SK-N-SH (cell line): ENCODE measurements at regions of chr2 and their contacts with region 1.

Region 1: DNA sequence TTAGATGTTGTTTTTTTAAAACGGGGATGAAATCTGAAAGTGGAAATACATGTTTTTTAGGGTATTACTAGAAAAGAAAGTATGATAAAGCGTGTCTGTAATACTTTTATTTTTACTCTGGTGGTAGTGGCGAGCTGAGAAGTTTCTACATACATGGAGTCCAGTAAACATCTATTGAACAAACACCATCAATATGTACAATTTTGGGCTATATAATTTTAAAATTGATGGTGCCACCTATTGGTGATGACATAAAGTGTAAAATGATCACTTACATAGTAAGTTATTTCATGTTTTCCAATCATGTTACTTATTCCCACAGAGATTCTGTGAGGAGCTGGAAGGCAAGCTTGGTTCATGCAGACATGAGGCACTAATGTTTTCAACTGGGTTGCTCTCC is 31.5 kb upstream of the NFE2L2 start:
- DNase-seq: peak; percentile 14
- H3K4me3 ChIP-seq: no peak overlapping the region
- H3K27ac ChIP-seq: peak overlapping the region; percentile 21 to 81; a peak in 2 of 4 replicates
- H3K4me1 ChIP-seq: no peaks in the 10 kb centered on the region
- H3K27me3 ChIP-seq: no peaks in the 10 kb centered on the region
- CTCF ChIP-seq: peak; percentile 57
- EP300 ChIP-seq: no peak
- RAD21 ChIP-seq: peak; percentile 46

Region 2: GRCh38 chr2:177273408-177273807 is 22.6 kb before region 1 on chr2:
- CTCF ChIA-PET with region 1: interaction called, 13 read pairs
- POLR2A ChIA-PET with region 1: no interaction called
- DNase-seq: no peak
- H3K4me3 ChIP-seq: no peak overlapping the region
- H3K27ac ChIP-seq: no peak overlapping the region
- H3K4me1 ChIP-seq: no peaks in the 10 kb centered on the region; a peak in 1 of 4 replicates
- H3K27me3 ChIP-seq: no peaks in the 10 kb centered on the region
- CTCF ChIP-seq: no peak
- EP300 ChIP-seq: no peak
- RAD21 ChIP-seq: no peak

Region 3: DNA sequence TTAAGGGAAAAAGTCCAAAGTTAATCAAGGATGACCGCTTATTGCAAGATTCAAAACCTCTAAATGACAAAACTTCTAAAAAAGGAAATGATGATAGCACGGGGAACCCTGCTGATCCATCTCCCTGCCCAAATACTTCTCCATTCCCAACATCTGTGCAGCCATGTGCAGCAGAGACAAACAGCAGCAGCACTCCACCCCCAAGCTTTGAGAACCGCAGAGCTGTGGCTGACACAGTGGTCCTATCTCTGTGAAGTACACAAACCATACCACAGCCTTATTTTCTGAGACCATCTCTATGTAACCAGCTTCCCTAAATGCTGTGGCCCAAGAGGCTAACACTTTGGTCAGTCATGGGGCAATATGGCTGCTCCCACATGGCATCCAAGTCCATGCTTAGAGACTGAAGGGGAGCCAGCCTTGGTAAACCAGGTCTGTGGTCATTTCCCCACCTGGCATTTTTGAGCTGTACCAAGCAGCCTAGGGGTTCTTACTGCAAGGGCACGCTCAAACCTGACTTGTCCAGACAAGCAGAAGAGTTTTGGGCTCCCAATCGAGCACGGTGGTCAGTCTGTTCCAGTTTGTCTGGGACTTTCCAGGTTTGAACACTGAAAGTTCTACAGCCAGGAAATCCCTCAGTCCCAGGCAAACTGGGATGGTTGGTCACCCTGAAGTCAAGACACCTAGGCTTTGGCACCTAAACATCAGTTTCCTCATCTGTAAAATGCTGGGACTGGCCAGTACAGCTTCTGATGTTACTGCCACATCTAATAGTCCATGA is 14.4 kb before region 1 on chr2:
- CTCF ChIA-PET with region 1: interaction called, 12 read pairs
- POLR2A ChIA-PET with region 1: no interaction called
- DNase-seq: no peak
- H3K4me3 ChIP-seq: no peak overlapping the region
- H3K27ac ChIP-seq: no peak overlapping the region
- H3K4me1 ChIP-seq: peaks cover 4 to 14% of the 10 kb centered on the region in 2 experiments; a peak in 2 of 4 replicates
- H3K27me3 ChIP-seq: no peaks in the 10 kb centered on the region
- CTCF ChIP-seq: no peak
- EP300 ChIP-seq: no peak
- RAD21 ChIP-seq: no peak

Region 4: GRCh38 chr2:177306550-177306949 is 10.5 kb after region 1 on chr2:
- CTCF ChIA-PET with region 1: interaction called, 10 read pairs
- POLR2A ChIA-PET with region 1: no interaction called
- DNase-seq: no peak
- H3K4me3 ChIP-seq: no peak overlapping the region
- H3K27ac ChIP-seq: no peak overlapping the region
- H3K4me1 ChIP-seq: no peaks in the 10 kb centered on the region
- H3K27me3 ChIP-seq: no peaks in the 10 kb centered on the region
- CTCF ChIP-seq: no peak
- EP300 ChIP-seq: no peak
- RAD21 ChIP-seq: no peak

Region 5: GRCh38 chr2:177322801-177323261 is 26.8 kb after region 1 on chr2:
- CTCF ChIA-PET with region 1: no interaction called
- POLR2A ChIA-PET with region 1: no interaction called
- DNase-seq: no peak
- H3K4me3 ChIP-seq: no peak overlapping the region
- H3K27ac ChIP-seq: no peak overlapping the region
- H3K4me1 ChIP-seq: peaks cover 0 to 2% of the 10 kb centered on the region in 2 experiments; a peak in 1 of 4 replicates
- H3K27me3 ChIP-seq: no peaks in the 10 kb centered on the region
- CTCF ChIP-seq: no peak
- EP300 ChIP-seq: no peak
- RAD21 ChIP-seq: no peak